Upper lobe of right lung (tissue), 1 donor: ENCODE measurements at regions of chr2 and their contacts with region 1.

Region 1: DNA sequence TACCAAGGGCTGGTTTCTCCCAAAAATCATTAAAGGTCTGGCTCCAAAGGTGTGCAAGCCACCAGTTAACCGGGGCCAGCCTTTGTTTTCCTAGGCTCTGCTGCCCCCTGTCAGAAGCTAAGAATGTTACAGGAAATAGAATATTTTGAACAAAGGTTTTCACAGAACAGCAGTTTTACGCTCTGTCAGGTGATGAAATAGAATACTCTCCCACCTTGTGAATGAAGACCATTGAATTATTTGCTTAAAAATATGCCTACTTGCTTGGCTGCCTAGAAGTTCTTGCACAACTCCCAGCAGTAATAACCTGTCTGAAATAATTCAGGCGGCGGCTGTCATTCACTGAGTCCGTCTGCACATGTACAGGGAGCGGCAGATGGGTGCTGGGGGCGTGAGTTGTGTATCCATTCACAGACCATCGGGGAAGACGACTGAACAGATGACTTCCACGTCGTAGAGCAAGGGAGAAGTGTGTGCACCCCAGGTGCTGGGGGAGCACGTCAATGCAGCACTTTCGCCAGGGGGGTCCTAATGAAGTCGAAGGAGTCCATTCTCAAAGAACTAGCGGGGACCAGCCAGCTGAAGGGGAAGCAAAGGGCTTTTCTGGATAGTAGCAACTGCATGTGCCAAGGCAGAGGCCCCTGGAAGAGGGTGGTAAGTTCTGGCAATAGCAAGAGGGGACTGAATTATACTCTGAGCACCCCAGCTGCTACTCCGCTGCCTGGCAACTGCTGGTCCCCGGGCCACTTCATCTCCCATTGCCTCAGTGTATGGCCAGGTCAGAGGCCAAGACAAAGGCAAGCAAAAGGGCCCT is 56.1 kb downstream of the SF3B1 start:
- DNase-seq: no peak
- ATAC-seq: peak; percentile 90
- H3K4me3 ChIP-seq: no peak overlapping the region
- H3K27ac ChIP-seq: no peak overlapping the region
- H3K4me1 ChIP-seq: no peaks in the 10 kb centered on the region
- H3K27me3 ChIP-seq: no peaks in the 10 kb centered on the region
- CTCF ChIP-seq: peak; percentile 78

Region 2: DNA sequence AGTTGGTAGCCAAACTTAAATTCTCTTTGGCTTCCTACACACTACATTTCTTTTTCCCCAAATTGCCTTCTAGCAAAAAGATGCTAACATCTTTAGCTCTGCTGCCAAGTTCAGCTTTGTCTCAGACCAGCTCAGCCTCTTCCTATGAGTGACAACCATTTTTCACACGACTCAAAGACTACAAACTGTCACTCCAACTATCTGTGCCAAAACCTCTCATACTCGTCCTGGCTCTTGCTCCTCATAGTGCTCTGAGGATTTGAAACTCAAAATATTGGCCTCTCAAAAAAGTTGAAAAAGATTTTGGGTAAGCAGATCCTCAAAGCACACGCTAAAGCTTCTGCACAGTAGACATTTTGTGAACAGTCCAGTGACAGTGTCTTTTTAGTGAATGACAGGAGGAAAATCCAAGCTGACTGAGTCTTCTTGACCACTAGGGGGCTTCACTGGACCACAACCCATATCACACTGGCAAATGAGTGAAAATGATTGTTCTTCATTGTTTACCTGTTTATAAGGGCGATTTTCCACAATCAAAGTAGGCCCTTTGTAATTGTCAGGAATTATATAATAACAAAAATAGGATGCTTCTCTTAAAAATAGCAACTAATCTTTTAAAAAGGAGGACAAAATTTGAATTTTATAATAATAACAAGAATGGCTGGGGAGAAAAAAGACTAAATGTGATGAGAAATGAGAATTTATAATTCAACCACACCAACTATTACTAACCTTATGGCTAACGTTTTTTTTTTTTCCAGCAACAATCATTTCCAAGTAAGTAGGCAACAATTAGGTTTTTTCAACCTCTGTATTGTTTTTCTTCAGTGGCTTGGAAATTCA is 366.7 kb before region 1 on chr2:
- intact Hi-C with region 1: loop called (anchors 10 kb)
- DNase-seq: no peak
- ATAC-seq: peak; percentile 71
- H3K4me3 ChIP-seq: no peak overlapping the region
- H3K27ac ChIP-seq: peak overlapping the region; percentile 2
- H3K4me1 ChIP-seq: peaks cover 3% of the 10 kb centered on the region
- H3K27me3 ChIP-seq: no peaks in the 10 kb centered on the region
- CTCF ChIP-seq: peak; percentile 81

Region 3: DNA sequence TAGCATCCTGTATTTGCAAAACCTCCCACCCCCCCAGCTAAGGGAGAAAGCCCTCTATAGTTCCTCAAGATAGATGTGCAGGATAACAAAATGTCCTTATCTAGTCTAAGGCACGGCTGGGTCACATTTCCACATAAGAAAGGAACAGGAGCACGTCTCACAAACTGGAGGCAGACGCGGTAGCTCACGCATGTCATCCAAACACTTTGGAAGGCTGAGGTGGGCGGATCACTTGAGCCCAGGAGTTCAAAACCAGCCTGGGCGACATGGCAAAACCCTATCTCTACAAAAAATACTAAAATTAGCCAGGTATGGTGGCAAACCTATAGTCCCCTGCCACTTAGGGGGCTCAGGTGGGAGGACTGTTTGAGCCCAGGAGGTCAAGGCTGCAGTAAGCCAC is 46.8 kb after region 1 on chr2:
- intact Hi-C with region 1: no loop called
- DNase-seq: no peak
- ATAC-seq: no peak
- H3K4me3 ChIP-seq: no peak overlapping the region
- H3K27ac ChIP-seq: no peak overlapping the region
- H3K4me1 ChIP-seq: peaks cover 52% of the 10 kb centered on the region
- H3K27me3 ChIP-seq: no peaks in the 10 kb centered on the region
- CTCF ChIP-seq: no peak